Activated T-helper 2 cell treated with anti-CD3 and anti-CD28 coated beads, Interferon-gamma antibody, Interleukin-2, Interleukin-4, amounts not matched to agents 10 μg/mL and 5 μg/mL and 100 μg/mL, durations not matched to agents 14 hours and 24 hours and 36 hours (primary cell): ENCODE measurements at regions of chr12 and their contacts with region 1.

Region 1: GRCh38 chr12:116737774-116738700 is at the starts of genes RNFT2 and SPRING1:
- DNase-seq: peak; percentile 99
- H3K4me3 Mint-ChIP-seq: peak within 1 kb of the TSS; percentile 87
- H3K27ac Mint-ChIP-seq: peak within 1 kb of the TSS; percentile 42
- H3K4me1 Mint-ChIP-seq: peaks cover 18% of the 10 kb centered on the region
- H3K27me3 Mint-ChIP-seq: no peaks in the 10 kb centered on the region
- total RNA-seq, gene RNFT2: 11.0 and 14.4 TPM in 2 replicates
- total RNA-seq, gene SPRING1: 32.4 and 36.1 TPM in 2 replicates

Region 2: DNA sequence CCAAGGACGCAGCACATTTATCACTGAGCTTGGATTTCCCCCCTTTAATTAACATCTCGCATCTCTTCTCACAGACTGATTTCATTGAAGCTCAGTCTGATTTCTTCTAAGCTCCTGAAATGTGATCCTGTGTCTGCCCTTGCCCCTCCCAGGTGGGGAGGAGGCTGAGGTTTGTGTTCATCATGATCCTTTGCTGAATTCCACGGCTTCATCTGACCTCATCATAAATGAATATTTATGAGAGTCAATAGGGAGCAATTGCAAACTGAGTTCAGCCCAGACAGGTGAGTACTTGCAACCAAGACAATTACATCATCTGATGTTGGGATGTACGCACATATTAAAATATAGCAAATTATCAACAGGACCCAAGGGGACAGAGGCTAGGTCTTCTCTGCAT is 106.4 kb before region 1 on chr12:
- intact Hi-C with region 1: no loop called
- DNase-seq: no peak
- H3K4me3 Mint-ChIP-seq: no peak overlapping the region
- H3K27ac Mint-ChIP-seq: no peak overlapping the region
- H3K4me1 Mint-ChIP-seq: peaks cover 4% of the 10 kb centered on the region
- H3K27me3 Mint-ChIP-seq: peaks cover 40% of the 10 kb centered on the region

Region 3: DNA sequence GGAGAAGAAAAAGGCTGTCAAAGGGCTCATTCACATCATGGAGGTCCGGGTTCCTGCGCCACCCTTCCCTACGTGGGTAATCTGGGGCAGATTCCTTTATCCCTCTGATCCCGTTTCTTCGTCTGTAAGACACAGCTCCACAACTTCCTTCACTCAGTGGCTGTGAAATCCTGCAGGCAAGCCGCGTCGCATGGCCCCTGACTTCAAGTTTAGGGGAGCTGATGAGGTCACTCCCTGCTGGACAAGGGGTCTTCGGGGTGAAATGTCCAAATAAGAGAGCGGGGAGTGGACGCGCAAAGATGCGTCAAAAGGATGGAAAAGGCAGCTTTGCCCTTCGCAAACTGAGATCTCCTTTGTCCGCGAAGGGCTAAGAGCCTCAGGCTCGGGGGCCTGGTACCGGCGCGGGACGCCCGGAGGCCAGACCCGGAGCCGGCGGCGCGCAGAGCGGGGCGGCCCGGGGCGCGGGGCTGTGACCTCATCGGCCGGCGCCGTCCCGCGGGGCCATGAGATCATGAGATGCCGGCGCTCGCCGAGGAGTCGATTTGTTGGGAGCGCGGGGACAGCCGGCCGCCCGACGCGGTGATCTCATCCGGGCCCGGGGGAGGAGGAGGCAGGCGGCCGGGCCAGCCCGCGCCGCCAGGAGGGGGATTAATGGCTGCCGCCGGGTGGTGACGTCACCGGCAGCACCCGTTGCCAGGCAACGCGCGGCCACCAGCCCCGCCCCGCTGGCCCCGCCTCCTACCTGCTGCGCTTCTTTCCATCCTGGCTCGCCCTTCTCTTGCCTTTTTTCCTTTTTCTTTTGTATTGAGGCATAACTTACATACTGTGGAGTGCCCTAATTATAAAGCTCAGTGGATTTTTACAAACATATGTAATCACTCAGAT is 81.2 kb after region 1 on chr12:
- intact Hi-C with region 1: loop called (anchors 1 kb)
- DNase-seq: peak; percentile 85
- H3K4me3 Mint-ChIP-seq: peak overlapping the region; percentile 95
- H3K27ac Mint-ChIP-seq: peak overlapping the region; percentile 95
- H3K4me1 Mint-ChIP-seq: peaks cover 13% of the 10 kb centered on the region
- H3K27me3 Mint-ChIP-seq: peaks cover 5% of the 10 kb centered on the region

Region 4: DNA sequence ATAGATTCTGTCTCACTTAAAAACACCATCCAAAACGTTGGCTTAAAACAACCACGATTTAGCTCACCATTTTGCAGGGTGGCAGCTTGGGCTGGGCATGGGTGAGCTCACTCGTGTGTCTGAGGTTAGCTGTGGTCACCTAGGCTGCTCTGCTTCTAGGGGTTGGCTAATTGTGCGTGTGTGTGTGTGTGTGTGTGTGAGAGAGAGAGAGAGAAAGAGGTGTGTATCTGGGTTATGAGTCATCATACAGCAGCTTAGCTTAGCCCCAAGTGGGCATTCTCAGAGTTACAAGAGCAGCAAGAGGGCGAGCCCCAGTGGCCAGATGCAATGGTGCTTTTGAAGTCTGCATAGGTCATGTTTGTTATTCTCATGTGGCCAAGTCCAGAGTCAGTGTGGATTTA is 178.7 kb after region 1 on chr12:
- intact Hi-C with region 1: no loop called
- DNase-seq: no peak
- H3K4me3 Mint-ChIP-seq: no peak overlapping the region
- H3K27ac Mint-ChIP-seq: no peak overlapping the region
- H3K4me1 Mint-ChIP-seq: peaks cover 30% of the 10 kb centered on the region
- H3K27me3 Mint-ChIP-seq: peaks cover 39% of the 10 kb centered on the region

Region 5: GRCh38 chr12:117098361-117099217 is 360.6 kb after region 1 on chr12:
- intact Hi-C with region 1: loop called (anchors 1 kb)
- DNase-seq: peak; percentile 22
- H3K4me3 Mint-ChIP-seq: peak overlapping the region; percentile 77
- H3K27ac Mint-ChIP-seq: no peak overlapping the region
- H3K4me1 Mint-ChIP-seq: peaks cover 21% of the 10 kb centered on the region
- H3K27me3 Mint-ChIP-seq: peaks cover 21% of the 10 kb centered on the region

Region 6: GRCh38 chr12:117190210-117190781 is 452.3 kb after region 1 on chr12 and contains the start of gene FBXO21:
- intact Hi-C with region 1: loop called (anchors 1 kb)
- DNase-seq: peak; percentile 87
- H3K4me3 Mint-ChIP-seq: peak within 1 kb of the TSS; percentile 89
- H3K27ac Mint-ChIP-seq: peak within 1 kb of the TSS; percentile 68
- H3K4me1 Mint-ChIP-seq: peaks cover 16% of the 10 kb centered on the region
- H3K27me3 Mint-ChIP-seq: peaks cover 8% of the 10 kb centered on the region
- total RNA-seq, gene FBXO21: 24.3 and 27.3 TPM in 2 replicates